GM12878 (cell line): ENCODE measurements at regions of chr20 and their contacts with region 1.

Region 1: DNA sequence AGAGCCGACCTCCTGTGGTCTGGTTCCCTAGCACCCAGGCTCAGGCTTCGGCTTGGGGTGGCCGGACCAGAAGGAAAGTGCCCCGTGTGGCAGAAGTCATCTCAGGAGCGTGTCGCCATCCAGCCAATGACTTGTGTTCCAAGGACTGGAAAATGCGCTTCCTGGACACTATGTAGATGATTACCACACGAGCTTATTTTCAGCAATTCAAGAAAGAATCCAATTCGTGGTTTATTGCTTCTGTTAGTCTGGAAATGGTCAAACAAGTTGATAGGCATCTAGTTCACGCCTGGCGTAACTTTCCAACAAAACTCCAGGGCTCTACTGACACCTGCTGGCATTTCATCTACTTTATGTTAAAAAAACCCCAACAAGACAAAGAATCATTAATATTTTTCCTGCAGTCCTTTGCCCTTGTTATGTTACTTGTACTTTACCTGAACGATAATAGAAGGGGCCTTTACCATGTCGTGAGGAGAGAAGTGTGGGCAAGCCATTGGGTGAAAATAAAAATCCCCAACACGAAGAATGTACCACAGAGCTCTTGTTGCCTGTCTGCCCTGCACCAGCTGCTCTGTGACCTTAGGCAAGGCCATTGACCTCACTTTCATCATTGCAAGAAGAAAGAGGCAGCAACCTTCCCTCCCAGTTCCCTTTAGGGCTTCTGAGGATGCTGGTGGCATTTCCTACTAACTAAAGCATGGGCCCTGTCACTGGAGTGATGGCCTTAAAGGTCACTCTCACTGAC is 154.7 kb upstream of the LAMP5 start:
- DNase-seq: no peak
- ATAC-seq: no peak
- H3K4me3 ChIP-seq: no peak overlapping the region
- H3K27ac ChIP-seq: no peak overlapping the region
- H3K4me1 ChIP-seq: no peaks in the 10 kb centered on the region
- H3K27me3 ChIP-seq: no peaks in the 10 kb centered on the region; a peak in 1 of 4 replicates
- CTCF ChIP-seq: peak in 2 of 3 experiments; percentile 12 to 23; a peak in 2 of 6 replicates
- EP300 ChIP-seq: no peak
- POLR2A ChIP-seq: no peak
- RAD21 ChIP-seq: peak; percentile 49

Region 2: GRCh38 chr20:8756410-8756809 is 603.3 kb before region 1 on chr20:
- CTCF ChIA-PET with region 1: no interaction called
- POLR2A ChIA-PET with region 1: no interaction called
- RAD21 ChIA-PET with region 1: no interaction called
- SMC1A ChIA-PET with region 1: interaction called, 3 read pairs
- in situ Hi-C with region 1: no loop called
- intact Hi-C with region 1: loop called (anchors 10 kb)
- DNase-seq: no peak
- ATAC-seq: no peak
- H3K4me3 ChIP-seq: no peak overlapping the region
- H3K27ac ChIP-seq: no peak overlapping the region
- H3K4me1 ChIP-seq: no peaks in the 10 kb centered on the region
- H3K27me3 ChIP-seq: no peaks in the 10 kb centered on the region; a peak in 1 of 4 replicates
- CTCF ChIP-seq: no peak
- EP300 ChIP-seq: no peak
- POLR2A ChIP-seq: no peak
- RAD21 ChIP-seq: no peak

Region 3: GRCh38 chr20:8790442-8791074 is 569.2 kb before region 1 on chr20:
- CTCF ChIA-PET with region 1: interaction called, 5 read pairs
- POLR2A ChIA-PET with region 1: no interaction called
- RAD21 ChIA-PET with region 1: no interaction called
- SMC1A ChIA-PET with region 1: no interaction called
- in situ Hi-C with region 1: no loop called
- intact Hi-C with region 1: loop called (anchors 2 kb)
- DNase-seq: no peak
- ATAC-seq: peak; percentile 66
- H3K4me3 ChIP-seq: no peak overlapping the region
- H3K27ac ChIP-seq: no peak overlapping the region
- H3K4me1 ChIP-seq: no peaks in the 10 kb centered on the region
- H3K27me3 ChIP-seq: no peaks in the 10 kb centered on the region; a peak in 1 of 4 replicates
- CTCF ChIP-seq: peak; percentile 78 to 96 (median 94)
- EP300 ChIP-seq: no peak
- POLR2A ChIP-seq: no peak
- RAD21 ChIP-seq: peak; percentile 65

Region 4: GRCh38 chr20:8853805-8854338 is 505.9 kb before region 1 on chr20:
- CTCF ChIA-PET with region 1: interaction called, 6 read pairs
- POLR2A ChIA-PET with region 1: no interaction called
- RAD21 ChIA-PET with region 1: no interaction called
- SMC1A ChIA-PET with region 1: no interaction called
- in situ Hi-C with region 1: loop called (anchors 10 kb)
- intact Hi-C with region 1: loop called (anchors 2 kb)
- DNase-seq: peak; percentile 5
- ATAC-seq: peak; percentile 92
- H3K4me3 ChIP-seq: no peak overlapping the region
- H3K27ac ChIP-seq: no peak overlapping the region
- H3K4me1 ChIP-seq: no peaks in the 10 kb centered on the region
- H3K27me3 ChIP-seq: no peaks in the 10 kb centered on the region
- CTCF ChIP-seq: peak; percentile 78 to 86 (median 80)
- EP300 ChIP-seq: no peak
- POLR2A ChIP-seq: no peak
- RAD21 ChIP-seq: peak; percentile 68